Panc1 (cell line): ENCODE measurements at regions of chr4 and their contacts with region 1.

Region 1: GRCh38 chr4:73598916-73599581 is 21.2 kb downstream of the RASSF6 start:
- DNase-seq: no peak
- ATAC-seq: peak; percentile 56
- H3K4me3 ChIP-seq: no peak overlapping the region
- H3K27ac ChIP-seq: no peak overlapping the region
- H3K4me1 ChIP-seq: no peaks in the 10 kb centered on the region
- H3K27me3 ChIP-seq: no peaks in the 10 kb centered on the region
- CTCF ChIP-seq: no peak

Region 2: DNA sequence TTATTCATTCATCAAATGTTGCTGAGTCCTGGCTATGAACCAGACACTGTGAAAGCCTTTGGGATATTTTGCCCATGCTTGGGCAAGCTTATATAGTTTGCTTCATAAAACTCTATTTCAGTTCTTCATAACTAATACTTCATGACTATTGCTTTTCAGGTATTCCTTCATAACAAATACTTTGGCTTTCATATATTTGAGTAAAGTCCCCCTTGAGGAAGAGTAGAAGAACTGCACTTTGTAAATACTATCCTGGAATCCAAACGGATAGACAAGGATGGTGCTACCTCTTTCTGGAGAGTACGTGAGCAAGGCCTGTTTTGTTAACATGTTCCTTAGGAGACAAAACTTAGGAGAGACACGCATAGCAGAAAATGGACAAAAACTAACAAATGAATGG is 164.7 kb before region 1 on chr4:
- CTCF ChIA-PET with region 1: no interaction called
- POLR2A ChIA-PET with region 1: no interaction called
- in situ Hi-C with region 1: no loop called
- intact Hi-C with region 1: no loop called
- DNase-seq: no peak
- ATAC-seq: no peak
- H3K4me3 ChIP-seq: no peak overlapping the region
- H3K27ac ChIP-seq: no peak overlapping the region
- H3K4me1 ChIP-seq: no peaks in the 10 kb centered on the region
- H3K27me3 ChIP-seq: no peaks in the 10 kb centered on the region; the same call in 1 of the 2 replicates
- CTCF ChIP-seq: peak; percentile 24; the same call in 1 of the 2 replicates

Region 3: DNA sequence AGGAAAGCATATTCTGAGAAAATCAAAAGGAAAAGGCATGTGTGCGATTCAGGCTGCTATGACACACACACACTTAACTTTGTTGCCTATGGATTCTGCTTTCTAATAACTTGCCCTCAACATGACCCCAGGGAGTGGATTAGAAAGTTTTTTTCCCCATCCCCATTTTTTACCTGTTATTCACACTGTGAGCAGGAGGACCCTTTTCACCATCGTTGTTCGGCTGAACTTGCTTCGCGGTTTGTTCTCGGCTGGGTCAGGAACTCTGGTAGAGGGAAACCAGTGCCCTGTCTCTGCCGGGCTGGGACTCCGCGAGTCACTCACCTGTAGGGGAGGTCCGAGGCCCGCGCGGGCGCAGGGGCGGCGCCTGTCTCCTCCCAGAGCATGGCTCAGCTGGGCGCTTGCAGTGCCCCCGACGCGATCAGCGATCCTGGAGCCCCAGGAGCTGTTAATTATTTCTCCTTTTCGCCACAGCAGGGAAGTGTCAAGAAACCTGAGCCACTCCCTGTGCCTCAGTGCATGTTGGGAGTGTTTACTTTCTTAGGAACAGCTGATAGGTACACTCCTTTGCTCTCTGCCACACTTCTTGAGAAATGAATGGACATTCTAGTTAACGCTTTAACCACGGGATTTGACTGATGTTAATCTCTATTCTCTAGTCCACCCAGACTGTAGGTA is 21.2 kb after region 1 on chr4 and contains the start of gene RASSF6:
- CTCF ChIA-PET with region 1: no interaction called
- POLR2A ChIA-PET with region 1: no interaction called
- in situ Hi-C with region 1: no loop called
- intact Hi-C with region 1: loop called (anchors 1 kb)
- DNase-seq: no peak
- ATAC-seq: peak; percentile 93
- H3K4me3 ChIP-seq: peak within 1 kb of the TSS; percentile 32 to 57
- H3K27ac ChIP-seq: no peak within 1 kb of the TSS
- H3K4me1 ChIP-seq: no peaks in the 10 kb centered on the region
- H3K27me3 ChIP-seq: no peaks in the 10 kb centered on the region
- CTCF ChIP-seq: no peak
- total RNA-seq, gene RASSF6: 0.15 TPM

Region 4: DNA sequence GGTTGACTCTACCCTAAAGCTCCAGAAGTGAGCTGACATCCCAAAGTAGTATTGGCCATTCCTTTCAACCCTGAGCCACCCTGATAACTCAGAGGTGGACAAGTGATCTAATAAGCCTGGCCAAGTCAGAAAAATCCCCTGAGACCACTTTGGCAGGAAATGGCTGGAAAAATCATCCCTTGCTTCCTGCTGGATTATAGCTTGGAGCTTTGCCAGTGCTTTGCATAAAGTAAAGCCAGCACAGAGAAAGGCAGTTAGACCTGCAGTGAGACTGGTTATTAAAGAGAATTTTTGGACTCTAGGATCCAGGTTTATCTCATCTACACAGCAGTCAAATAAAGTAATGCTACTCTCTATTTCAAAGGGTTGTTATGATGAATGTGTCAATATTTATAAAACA is 433.0 kb after region 1 on chr4:
- CTCF ChIA-PET with region 1: no interaction called
- POLR2A ChIA-PET with region 1: no interaction called
- in situ Hi-C with region 1: no loop called
- intact Hi-C with region 1: no loop called
- DNase-seq: no peak
- ATAC-seq: no peak
- H3K4me3 ChIP-seq: no peak overlapping the region
- H3K27ac ChIP-seq: no peak overlapping the region
- H3K4me1 ChIP-seq: no peaks in the 10 kb centered on the region
- H3K27me3 ChIP-seq: no peaks in the 10 kb centered on the region
- CTCF ChIP-seq: no peak